B cell (primary cell): ENCODE measurements at regions of chr2 and their contacts with region 1.

Region 1: DNA sequence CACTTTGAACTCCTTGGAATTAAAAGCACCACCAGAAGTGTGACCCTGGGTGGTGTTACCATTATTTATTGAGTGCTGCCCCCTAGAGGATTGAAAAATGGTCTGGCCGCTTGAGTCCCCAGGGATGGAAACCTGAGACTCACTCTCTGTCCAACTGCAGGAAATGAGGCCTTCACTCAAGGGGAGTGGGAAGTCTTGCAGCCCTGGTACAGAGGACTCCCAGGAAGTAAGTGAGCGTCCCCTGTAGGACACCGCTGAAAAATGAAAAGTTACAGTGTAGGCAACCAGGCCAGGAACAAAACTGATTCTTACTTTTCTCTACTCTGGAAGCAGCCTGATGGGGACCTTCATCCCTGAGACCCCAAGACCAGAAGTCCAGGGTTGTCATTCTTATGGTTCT is 2.2 kb upstream of the NRP2 start:
- DNase-seq: peak; percentile 71
- ATAC-seq: peak; percentile 22
- H3K4me3 ChIP-seq: no peak overlapping the region
- H3K4me3 Mint-ChIP-seq: peak overlapping the region; percentile 31
- H3K27ac ChIP-seq: no peak overlapping the region
- H3K27ac Mint-ChIP-seq: peak overlapping the region; percentile 48
- H3K4me1 ChIP-seq: peaks cover 32 to 33% of the 10 kb centered on the region in 2 donors
- H3K4me1 Mint-ChIP-seq: peaks cover 37% of the 10 kb centered on the region
- H3K27me3 ChIP-seq: peaks cover 0 to 39% (median 24%) of the 10 kb centered on the region in 4 experiments
- H3K27me3 Mint-ChIP-seq: peaks cover 26% of the 10 kb centered on the region
- CTCF ChIP-seq: peak; percentile 85

Region 2: GRCh38 chr2:204145263-204145751 is 1534.8 kb before region 1 on chr2:
- CTCF ChIA-PET with region 1: interaction called, 9 read pairs
- POLR2A ChIA-PET with region 1: no interaction called
- intact Hi-C with region 1: loop called (anchors 2 kb)
- DNase-seq: peak; percentile 68
- ATAC-seq: peak; percentile 60
- H3K4me3 ChIP-seq: peak overlapping the region; percentile 17 to 51 (median 42)
- H3K4me3 Mint-ChIP-seq: peak overlapping the region; percentile 80
- H3K27ac ChIP-seq: no peak overlapping the region
- H3K27ac Mint-ChIP-seq: no peak overlapping the region
- H3K4me1 ChIP-seq: peaks cover 0 to 5% of the 10 kb centered on the region in 2 donors
- H3K4me1 Mint-ChIP-seq: peaks cover 10% of the 10 kb centered on the region
- H3K27me3 ChIP-seq: peaks cover 0 to 8% (median 3%) of the 10 kb centered on the region in 4 experiments
- H3K27me3 Mint-ChIP-seq: peaks cover 28% of the 10 kb centered on the region
- CTCF ChIP-seq: peak; percentile 92

Region 3: GRCh38 chr2:204325468-204325867 is 1354.6 kb before region 1 on chr2:
- CTCF ChIA-PET with region 1: interaction called, 3 read pairs
- POLR2A ChIA-PET with region 1: no interaction called
- intact Hi-C with region 1: loop called (anchors 1 kb)
- DNase-seq: peak; percentile 63
- ATAC-seq: no peak
- H3K4me3 ChIP-seq: no peak overlapping the region
- H3K4me3 Mint-ChIP-seq: no peak overlapping the region
- H3K27ac ChIP-seq: no peak overlapping the region
- H3K27ac Mint-ChIP-seq: no peak overlapping the region
- H3K4me1 ChIP-seq: no peaks in the 10 kb centered on the region
- H3K4me1 Mint-ChIP-seq: peaks cover 1% of the 10 kb centered on the region
- H3K27me3 ChIP-seq: no peaks in the 10 kb centered on the region
- H3K27me3 Mint-ChIP-seq: peaks cover 5% of the 10 kb centered on the region
- CTCF ChIP-seq: peak; percentile 83

Region 4: DNA sequence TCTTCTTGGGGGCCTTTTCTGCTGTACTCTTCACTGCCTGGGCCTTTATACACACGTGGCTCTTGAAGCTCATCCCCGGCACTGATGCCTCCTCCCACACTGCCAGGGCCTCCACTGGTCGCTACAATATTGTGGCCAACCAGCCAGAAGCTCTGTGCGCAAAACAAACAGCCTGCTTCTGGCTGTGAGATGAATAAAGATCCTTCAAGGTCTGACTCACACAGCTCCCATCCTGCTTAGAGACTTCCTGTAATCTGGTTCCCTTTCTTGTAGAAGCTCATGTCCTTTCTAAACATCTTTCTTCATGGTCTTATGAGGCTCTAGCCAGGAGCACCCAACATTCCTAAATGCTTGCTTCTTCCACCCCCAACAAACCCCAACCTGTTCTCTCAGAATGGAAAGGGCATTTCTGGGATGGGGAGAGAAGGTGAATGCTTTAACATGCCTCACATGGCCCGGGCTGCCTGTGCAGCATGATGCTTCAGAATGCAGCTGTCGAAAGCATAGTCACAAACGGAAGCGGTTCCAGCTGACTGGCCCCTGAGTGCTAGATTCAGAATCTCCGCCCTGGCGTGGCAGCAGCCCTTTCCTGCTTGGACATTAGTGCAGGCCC is 26.8 kb after region 1 on chr2:
- CTCF ChIA-PET with region 1: interaction called, 54 read pairs
- POLR2A ChIA-PET with region 1: interaction called, 15 read pairs
- intact Hi-C with region 1: loop called (anchors 1 kb)
- DNase-seq: peak; percentile 86
- ATAC-seq: peak; percentile 95
- H3K4me3 ChIP-seq: peak overlapping the region in 3 of 5 experiments; percentile 25 to 41 (median 30)
- H3K4me3 Mint-ChIP-seq: peak overlapping the region; percentile 84
- H3K27ac ChIP-seq: peak overlapping the region; percentile 86 to 93
- H3K27ac Mint-ChIP-seq: peak overlapping the region; percentile 99
- H3K4me1 ChIP-seq: peaks cover 41 to 45% of the 10 kb centered on the region in 2 donors
- H3K4me1 Mint-ChIP-seq: peaks cover 61% of the 10 kb centered on the region
- H3K27me3 ChIP-seq: no peaks in the 10 kb centered on the region
- H3K27me3 Mint-ChIP-seq: no peaks in the 10 kb centered on the region
- CTCF ChIP-seq: no peak

Region 5: DNA sequence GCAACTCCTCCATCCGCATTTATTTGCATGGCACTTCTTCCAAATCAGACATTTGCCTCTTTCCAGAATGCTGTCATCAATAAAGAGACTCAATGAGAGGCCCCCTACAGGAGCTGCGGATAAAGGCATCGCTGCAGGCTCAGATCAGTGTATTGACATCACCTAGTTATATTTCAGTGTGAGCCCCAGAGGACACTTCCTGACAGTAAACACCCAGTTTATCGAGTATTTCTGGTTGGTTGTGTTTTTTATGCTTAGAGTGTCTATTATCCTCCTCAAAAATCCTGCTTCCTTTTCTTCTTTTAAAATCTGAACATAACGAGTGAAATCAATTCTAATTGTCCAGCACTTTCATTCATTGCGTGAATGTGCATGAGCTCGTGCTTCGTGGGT is 41.0 kb after region 1 on chr2:
- CTCF ChIA-PET with region 1: interaction called, 12 read pairs
- POLR2A ChIA-PET with region 1: interaction called, 4 read pairs
- intact Hi-C with region 1: loop called (anchors 5 kb)
- DNase-seq: no peak
- ATAC-seq: no peak
- H3K4me3 ChIP-seq: no peak overlapping the region
- H3K4me3 Mint-ChIP-seq: no peak overlapping the region
- H3K27ac ChIP-seq: no peak overlapping the region
- H3K27ac Mint-ChIP-seq: peak overlapping the region; percentile 3
- H3K4me1 ChIP-seq: peaks cover 11 to 18% of the 10 kb centered on the region in 2 donors
- H3K4me1 Mint-ChIP-seq: peaks cover 18% of the 10 kb centered on the region
- H3K27me3 ChIP-seq: no peaks in the 10 kb centered on the region
- H3K27me3 Mint-ChIP-seq: no peaks in the 10 kb centered on the region
- CTCF ChIP-seq: peak; percentile 28

Region 6: DNA sequence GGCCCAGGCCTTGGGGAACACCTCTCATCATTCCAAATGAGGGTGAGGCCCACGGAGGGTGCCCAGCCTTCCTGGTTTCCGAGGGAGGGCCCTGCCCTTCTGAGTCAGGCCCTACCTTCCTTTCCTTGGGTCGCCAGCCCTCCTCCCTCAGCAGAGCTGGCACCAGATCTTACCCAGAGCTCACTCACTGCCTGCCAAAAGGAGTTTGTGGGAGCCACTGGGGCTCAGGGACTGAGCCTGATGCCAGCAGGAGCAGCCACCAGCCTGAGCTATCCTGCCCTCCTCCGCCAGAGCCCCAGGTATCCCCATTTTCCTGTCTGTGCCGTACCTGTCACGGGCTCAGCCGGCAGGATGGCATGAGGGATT is 66.3 kb after region 1 on chr2:
- CTCF ChIA-PET with region 1: no interaction called
- POLR2A ChIA-PET with region 1: no interaction called
- intact Hi-C with region 1: no loop called
- DNase-seq: no peak
- ATAC-seq: no peak
- H3K4me3 ChIP-seq: no peak overlapping the region
- H3K4me3 Mint-ChIP-seq: no peak overlapping the region
- H3K27ac ChIP-seq: no peak overlapping the region
- H3K27ac Mint-ChIP-seq: no peak overlapping the region
- H3K4me1 ChIP-seq: no peaks in the 10 kb centered on the region
- H3K4me1 Mint-ChIP-seq: no peaks in the 10 kb centered on the region
- H3K27me3 ChIP-seq: no peaks in the 10 kb centered on the region
- H3K27me3 Mint-ChIP-seq: no peaks in the 10 kb centered on the region
- CTCF ChIP-seq: no peak

Region 7: DNA sequence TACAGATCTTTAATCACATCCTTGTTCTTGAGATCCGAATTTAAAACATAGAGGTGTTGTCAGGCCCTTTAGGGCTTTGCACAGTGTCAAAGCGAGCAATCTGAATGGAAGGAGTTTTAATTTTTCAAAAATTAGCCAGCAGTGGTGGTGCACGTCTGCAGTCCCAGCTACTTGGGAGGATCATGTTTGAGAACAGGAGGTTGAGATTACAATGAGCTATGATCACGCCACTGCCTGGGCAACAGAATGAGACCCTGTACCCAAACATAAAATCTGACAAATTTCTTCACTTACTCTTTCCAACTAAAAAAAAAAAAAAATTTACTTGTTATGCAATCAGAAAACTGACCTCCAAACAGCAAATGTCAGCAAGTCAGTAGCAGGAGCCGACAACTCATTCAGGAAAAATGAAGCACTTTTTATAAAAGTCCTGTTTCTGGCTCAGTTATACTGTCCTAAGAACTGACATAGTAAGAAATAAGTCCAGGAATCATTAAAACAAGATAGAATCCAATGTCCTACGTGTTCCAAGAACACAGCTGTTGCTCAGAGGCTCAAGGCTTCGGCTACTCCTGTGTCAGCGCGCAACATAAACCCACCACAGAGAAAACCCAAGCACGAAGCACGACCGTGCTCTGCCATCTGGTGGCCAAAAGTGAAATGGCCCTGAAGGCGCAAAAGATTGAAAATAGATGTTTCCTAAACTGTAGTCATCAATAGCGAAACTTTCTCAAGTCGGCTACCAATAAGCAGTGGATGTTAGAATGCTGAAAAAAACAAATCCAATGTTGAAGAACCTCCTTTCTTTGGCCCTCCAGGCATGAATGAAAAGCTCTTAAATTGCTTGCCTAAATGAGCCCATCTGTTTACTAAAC is 267.8 kb after region 1 on chr2:
- CTCF ChIA-PET with region 1: no interaction called
- POLR2A ChIA-PET with region 1: no interaction called
- intact Hi-C with region 1: loop called (anchors 5 kb)
- DNase-seq: peak; percentile 51
- ATAC-seq: peak; percentile 43
- H3K4me3 ChIP-seq: no peak overlapping the region
- H3K4me3 Mint-ChIP-seq: no peak overlapping the region
- H3K27ac ChIP-seq: no peak overlapping the region
- H3K27ac Mint-ChIP-seq: no peak overlapping the region
- H3K4me1 ChIP-seq: no peaks in the 10 kb centered on the region
- H3K4me1 Mint-ChIP-seq: peaks cover 3% of the 10 kb centered on the region
- H3K27me3 ChIP-seq: peaks cover 0 to 2% (median 0%) of the 10 kb centered on the region in 4 experiments
- H3K27me3 Mint-ChIP-seq: peaks cover 25% of the 10 kb centered on the region
- CTCF ChIP-seq: peak; percentile 90